ENCODE measurements at regions of chr11 and their contacts with region 1.

Region 1: GRCh38 chr11:67468835-67469811 is at the start of gene TMEM134:
- DNase-seq: peak; percentile 85 to 96 (median 88)
- ATAC-seq: peak; percentile 74 to 79
- H3K4me3 Mint-ChIP-seq: peak within 1 kb of the TSS; percentile 83 to 93 (median 90)
- H3K27ac Mint-ChIP-seq: peak within 1 kb of the TSS; percentile 84 to 96 (median 92)
- H3K4me1 Mint-ChIP-seq: peaks cover 13 to 40% (median 37%) of the 10 kb centered on the region in 4 donors
- H3K27me3 Mint-ChIP-seq: no peaks in the 10 kb centered on the region
- polyA plus RNA-seq, gene TMEM134: 128 to 148 (median 144) TPM

Region 2: GRCh38 chr11:67391304-67392132 is 77.6 kb before region 1 on chr11 and contains the start of gene RAD9A:
- POLR2A ChIA-PET with region 1: interaction called, 230 read pairs
- DNase-seq: peak; percentile 85 to 95 (median 90)
- ATAC-seq: peak; percentile 81 to 84
- H3K4me3 Mint-ChIP-seq: peak within 1 kb of the TSS; percentile 81 to 90 (median 87)
- H3K27ac Mint-ChIP-seq: peak within 1 kb of the TSS; percentile 68 to 93 (median 88)
- H3K4me1 Mint-ChIP-seq: peaks cover 30 to 47% (median 43%) of the 10 kb centered on the region in 4 donors
- H3K27me3 Mint-ChIP-seq: no peaks in the 10 kb centered on the region
- polyA plus RNA-seq, gene RAD9A: 6.5 to 9.4 (median 6.6) TPM

Region 3: DNA sequence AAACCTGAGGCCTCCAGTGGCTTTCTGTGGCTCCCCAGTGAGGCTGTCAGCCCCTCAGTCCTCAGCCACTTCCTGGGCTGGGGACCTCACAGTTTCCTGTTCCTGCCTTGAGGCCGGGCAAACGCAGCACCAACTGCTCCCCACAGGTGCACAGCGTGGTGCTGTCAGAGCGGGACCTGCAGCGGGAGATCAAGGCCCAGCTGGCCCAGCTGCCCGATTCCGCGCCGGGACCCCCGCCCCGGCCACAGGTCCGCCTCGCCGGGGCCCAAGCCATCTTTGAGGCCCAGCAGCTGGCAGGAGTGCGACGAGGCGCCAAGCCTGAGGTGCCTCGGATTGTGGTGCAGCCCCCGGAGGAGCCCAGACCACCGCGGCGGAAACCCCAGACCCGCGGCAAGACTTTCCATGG is 59.9 kb before region 1 on chr11:
- POLR2A ChIA-PET with region 1: interaction called, 235 read pairs
- DNase-seq: peak; percentile 46 to 90 (median 76)
- ATAC-seq: peak; percentile 73 to 85
- H3K4me3 Mint-ChIP-seq: peak overlapping the region; percentile 93 to 99 (median 98)
- H3K27ac Mint-ChIP-seq: peak overlapping the region; percentile 53 to 98 (median 94)
- H3K4me1 Mint-ChIP-seq: peaks cover 44 to 96% (median 88%) of the 10 kb centered on the region in 4 donors
- H3K27me3 Mint-ChIP-seq: no peaks in the 10 kb centered on the region

Region 4: GRCh38 chr11:67428052-67428914 is 40.8 kb before region 1 on chr11 and contains the start of gene RPS6KB2:
- POLR2A ChIA-PET with region 1: interaction called, 780 read pairs
- DNase-seq: peak; percentile 94 to 100 (median 99)
- ATAC-seq: peak; percentile 88 to 89
- H3K4me3 Mint-ChIP-seq: peak within 1 kb of the TSS; percentile 92 to 99 (median 98)
- H3K27ac Mint-ChIP-seq: peak within 1 kb of the TSS; percentile 91 to 98 (median 96)
- H3K4me1 Mint-ChIP-seq: peaks cover 14 to 61% (median 44%) of the 10 kb centered on the region in 4 donors
- H3K27me3 Mint-ChIP-seq: no peaks in the 10 kb centered on the region
- polyA plus RNA-seq, gene RPS6KB2: 41.9 to 45.9 (median 43.2) TPM

Region 5: GRCh38 chr11:67452141-67452952 is 16.8 kb before region 1 on chr11 and contains the start of gene GPR152:
- POLR2A ChIA-PET with region 1: interaction called, 138 read pairs
- DNase-seq: no peak
- ATAC-seq: no peak
- H3K4me3 Mint-ChIP-seq: no peak within 1 kb of the TSS
- H3K27ac Mint-ChIP-seq: peak within 1 kb of the TSS in 3 of 10 donors; percentile 8 to 80 (median 63)
- H3K4me1 Mint-ChIP-seq: peaks cover 11 to 42% (median 27%) of the 10 kb centered on the region in 4 donors
- H3K27me3 Mint-ChIP-seq: no peaks in the 10 kb centered on the region
- polyA plus RNA-seq, gene GPR152: 0.20 to 1.2 (median 0.86) TPM

Region 6: DNA sequence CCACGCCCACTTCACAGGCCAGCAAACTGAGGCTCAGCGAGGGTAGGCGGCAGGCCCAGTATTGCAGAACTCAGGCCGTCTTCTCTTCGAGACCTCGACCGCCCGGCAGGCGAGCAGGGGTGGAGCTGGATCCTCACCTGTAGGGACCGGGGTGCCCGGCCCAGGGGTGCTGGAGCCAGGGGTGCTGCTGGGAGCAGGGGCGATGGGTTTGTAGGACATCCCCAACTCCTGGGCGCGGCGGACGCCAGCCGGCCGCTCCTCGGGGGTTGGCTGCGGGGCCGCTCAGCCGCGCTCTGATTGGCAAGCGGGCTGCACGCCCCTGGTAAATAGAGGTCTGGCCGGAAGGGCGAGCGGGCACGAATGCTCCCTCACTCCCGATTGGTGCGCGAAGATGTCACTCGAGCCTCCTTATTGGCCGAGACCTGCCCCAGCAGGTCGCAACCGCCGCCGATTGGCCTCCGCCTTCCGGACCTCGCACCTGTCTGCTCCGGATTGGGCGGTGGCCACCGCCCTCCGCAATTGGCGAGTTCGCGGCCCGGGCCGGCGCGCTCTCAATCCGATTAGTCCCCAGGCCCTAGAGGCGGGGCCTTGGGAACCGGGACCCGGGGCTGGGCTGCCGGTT is 38.9 kb after region 1 on chr11 and contains the start of gene CDK2AP2:
- POLR2A ChIA-PET with region 1: interaction called, 17 read pairs
- DNase-seq: peak in 9 of 10 donors; percentile 92 to 99 (median 96)
- ATAC-seq: peak; percentile 74
- H3K4me3 Mint-ChIP-seq: peak within 1 kb of the TSS; percentile 81 to 94 (median 92)
- H3K27ac Mint-ChIP-seq: peak within 1 kb of the TSS; percentile 83 to 99 (median 97)
- H3K4me1 Mint-ChIP-seq: peaks cover 26 to 47% (median 39%) of the 10 kb centered on the region in 4 donors
- H3K27me3 Mint-ChIP-seq: peaks cover 0 to 5% (median under 1%) of the 10 kb centered on the region in 5 donors
- polyA plus RNA-seq, gene CDK2AP2: 75.9 to 96.8 (median 79.5) TPM